Activated B cell treated with CpG ODN at 0.5 μM for 24 hours (primary cell): ENCODE measurements at regions of chr10 and their contacts with region 1.

Region 1: GRCh38 chr10:5977471-5978229 is at the start of gene IL15RA:
- DNase-seq: peak; percentile 75
- ATAC-seq: peak; percentile 70
- H3K4me3 Mint-ChIP-seq: peak within 1 kb of the TSS; percentile 96
- H3K27ac Mint-ChIP-seq: peak within 1 kb of the TSS; percentile 91
- H3K4me1 Mint-ChIP-seq: peaks cover 41% of the 10 kb centered on the region
- H3K27me3 Mint-ChIP-seq: no peaks in the 10 kb centered on the region
- CTCF ChIP-seq: no peak
- total RNA-seq, gene IL15RA: 19.1 and 19.8 TPM in 2 replicates

Region 2: GRCh38 chr10:5446390-5446926 is 531.2 kb before region 1 on chr10:
- CTCF ChIA-PET with region 1: no interaction called
- POLR2A ChIA-PET with region 1: no interaction called
- intact Hi-C with region 1: loop called (anchors 10 kb)
- DNase-seq: peak; percentile 90
- ATAC-seq: peak; percentile 91
- H3K4me3 Mint-ChIP-seq: peak overlapping the region; percentile 86
- H3K27ac Mint-ChIP-seq: peak overlapping the region; percentile 87
- H3K4me1 Mint-ChIP-seq: peaks cover 56% of the 10 kb centered on the region
- H3K27me3 Mint-ChIP-seq: no peaks in the 10 kb centered on the region
- CTCF ChIP-seq: no peak

Region 3: GRCh38 chr10:5889624-5890451 is 87.8 kb before region 1 on chr10 and contains the starts of genes ANKRD16 and FBH1:
- CTCF ChIA-PET with region 1: interaction called, 3 read pairs
- POLR2A ChIA-PET with region 1: interaction called, 10 read pairs
- intact Hi-C with region 1: loop called (anchors 1 kb)
- DNase-seq: peak; percentile 100
- ATAC-seq: peak; percentile 85
- H3K4me3 Mint-ChIP-seq: peak within 1 kb of the TSS; percentile 87
- H3K27ac Mint-ChIP-seq: peak within 1 kb of the TSS; percentile 78
- H3K4me1 Mint-ChIP-seq: peaks cover 59% of the 10 kb centered on the region
- H3K27me3 Mint-ChIP-seq: no peaks in the 10 kb centered on the region
- CTCF ChIP-seq: no peak
- total RNA-seq, gene ANKRD16: 9.2 and 11.1 TPM in 2 replicates
- total RNA-seq, gene FBH1: 65.5 and 68.7 TPM in 2 replicates

Region 4: DNA sequence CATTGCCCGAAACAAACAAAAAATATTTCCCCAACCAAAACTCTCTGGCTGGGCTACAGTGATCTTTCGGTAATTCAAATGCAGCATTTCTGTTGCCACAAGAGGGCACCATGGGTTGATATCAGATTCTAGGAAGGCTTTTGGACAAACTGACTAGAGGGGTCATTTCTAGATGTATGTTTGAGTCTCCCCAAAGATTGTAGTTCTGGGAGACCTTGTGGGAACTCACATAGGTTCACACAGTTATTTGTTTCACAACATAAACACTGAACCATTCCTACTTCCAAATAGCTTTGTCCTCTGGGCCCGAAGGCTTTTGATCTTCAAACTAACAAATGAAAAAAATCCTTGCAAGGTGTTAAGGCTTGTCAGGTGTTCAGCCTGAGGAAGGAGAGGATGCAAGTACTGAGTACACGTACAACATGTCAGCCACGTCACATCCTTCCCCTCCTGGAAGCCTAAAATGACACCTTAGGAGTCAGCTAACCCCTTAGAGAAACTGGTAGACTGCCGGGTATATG is 36.7 kb after region 1 on chr10:
- CTCF ChIA-PET with region 1: interaction called, 16 read pairs
- POLR2A ChIA-PET with region 1: interaction called, 8 read pairs
- intact Hi-C with region 1: loop called (anchors 1 kb)
- DNase-seq: no peak
- ATAC-seq: peak; percentile 66
- H3K4me3 Mint-ChIP-seq: no peak overlapping the region
- H3K27ac Mint-ChIP-seq: peak overlapping the region; percentile 78
- H3K4me1 Mint-ChIP-seq: peaks cover 22% of the 10 kb centered on the region
- H3K27me3 Mint-ChIP-seq: no peaks in the 10 kb centered on the region
- CTCF ChIP-seq: no peak

Region 5: DNA sequence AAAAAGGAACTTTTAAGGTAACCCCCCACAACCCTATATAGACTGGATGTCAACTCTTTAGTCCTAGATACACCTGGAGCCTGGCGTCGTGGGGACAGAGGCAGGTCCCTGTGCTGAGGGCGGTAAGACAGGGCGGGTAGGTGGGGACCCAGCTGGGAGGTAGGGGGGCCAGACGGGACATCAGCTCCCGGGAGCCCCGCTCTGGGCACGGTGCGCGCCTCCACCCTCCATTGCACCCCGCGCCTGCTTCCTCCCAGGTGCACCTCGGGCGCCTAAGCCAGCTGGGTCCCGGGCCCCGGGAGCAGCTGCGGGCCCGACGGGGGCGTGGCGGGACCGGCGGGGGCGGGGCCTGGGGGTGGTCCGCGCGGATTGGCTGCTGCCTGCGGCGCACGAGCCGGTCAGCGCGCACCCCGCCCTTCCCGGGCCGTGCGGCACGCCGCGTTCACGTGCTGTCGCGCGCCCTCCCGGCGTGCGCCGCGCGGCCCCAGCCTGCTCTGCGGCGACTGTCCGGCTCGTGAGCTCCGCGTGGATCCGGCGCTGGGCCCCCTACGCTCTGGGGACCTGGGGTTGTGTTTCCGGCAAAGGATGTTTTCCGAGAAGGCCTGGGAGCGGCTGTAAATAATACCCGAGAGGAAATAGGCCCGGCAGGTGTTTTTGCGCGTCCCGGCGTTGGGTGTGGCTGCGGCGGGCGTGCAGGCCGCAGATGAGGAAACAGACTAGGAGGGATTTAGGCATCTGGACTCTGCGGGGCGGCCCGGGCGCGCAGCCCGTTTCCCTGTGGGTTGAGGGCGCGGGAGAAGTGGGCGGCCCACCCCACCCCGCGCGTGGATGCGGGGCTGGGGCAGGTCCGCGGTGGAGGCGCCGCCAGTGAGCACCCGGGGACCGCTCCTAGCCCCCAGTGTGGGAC is 186.0 kb after region 1 on chr10:
- CTCF ChIA-PET with region 1: no interaction called
- POLR2A ChIA-PET with region 1: no interaction called
- intact Hi-C with region 1: loop called (anchors 5 kb)
- DNase-seq: peak; percentile 90
- ATAC-seq: peak; percentile 98
- H3K4me3 Mint-ChIP-seq: peak overlapping the region; percentile 96
- H3K27ac Mint-ChIP-seq: peak overlapping the region; percentile 97
- H3K4me1 Mint-ChIP-seq: peaks cover 34% of the 10 kb centered on the region
- H3K27me3 Mint-ChIP-seq: no peaks in the 10 kb centered on the region
- CTCF ChIP-seq: no peak

Region 6: DNA sequence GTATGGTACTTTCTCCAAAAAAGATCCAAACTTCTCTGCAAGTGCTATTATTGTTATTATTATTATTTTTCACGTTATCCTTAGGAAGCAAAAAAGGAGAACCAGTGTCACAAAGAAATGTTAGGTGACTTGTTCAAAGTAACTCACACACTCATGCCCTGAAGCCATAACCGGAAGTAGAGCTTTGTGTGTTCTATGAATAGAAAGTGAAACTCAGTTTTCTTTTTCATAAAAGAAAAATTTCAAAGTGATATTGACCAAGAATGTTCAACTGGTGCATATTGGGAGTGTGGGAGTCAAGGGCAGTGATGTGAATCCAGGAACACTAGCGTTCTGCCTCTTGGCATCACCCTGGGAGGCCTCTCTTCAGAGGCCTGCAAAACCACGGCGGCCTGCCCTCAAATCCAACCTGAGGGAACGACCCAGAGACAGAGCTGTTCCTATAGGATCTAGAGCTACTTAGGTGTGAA is 496.3 kb after region 1 on chr10:
- CTCF ChIA-PET with region 1: no interaction called
- POLR2A ChIA-PET with region 1: no interaction called
- intact Hi-C with region 1: no loop called
- DNase-seq: no peak
- ATAC-seq: peak; percentile 56
- H3K4me3 Mint-ChIP-seq: peak overlapping the region; percentile 72
- H3K27ac Mint-ChIP-seq: peak overlapping the region; percentile 68
- H3K4me1 Mint-ChIP-seq: peaks cover 21% of the 10 kb centered on the region
- H3K27me3 Mint-ChIP-seq: peaks cover 15% of the 10 kb centered on the region
- CTCF ChIP-seq: no peak